MCF 10A (cell line): ENCODE measurements at regions of chr3 and their contacts with region 1.

Region 1: DNA sequence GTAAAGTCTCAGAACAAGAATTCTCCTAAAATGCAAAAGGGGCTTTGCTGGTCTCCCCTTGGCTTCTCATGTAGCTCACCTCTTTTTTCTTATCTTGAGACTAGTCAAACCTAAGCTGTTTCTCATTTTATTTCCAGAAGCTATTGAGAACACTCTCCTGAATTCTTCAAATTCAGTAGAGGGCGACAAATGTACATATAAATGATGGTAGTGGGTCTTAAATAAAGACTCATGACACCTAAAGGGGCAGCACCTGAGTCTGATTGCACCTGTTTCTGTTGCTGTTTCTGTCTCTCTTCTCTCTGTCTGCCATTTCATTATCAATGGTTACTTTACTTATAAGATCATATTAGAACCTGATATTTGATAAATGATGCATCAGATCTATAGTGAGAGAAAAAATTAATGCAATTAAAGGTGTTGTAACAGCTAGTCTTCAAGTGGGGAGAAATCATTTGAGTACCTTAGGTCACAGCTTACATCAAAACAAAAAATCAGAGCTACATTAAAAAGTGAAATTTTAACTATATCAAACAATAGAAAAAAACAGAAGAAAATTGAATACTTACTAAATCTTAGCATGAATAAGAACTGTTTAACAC is 7.0 kb downstream of the ADIPOQ start:
- DNase-seq: peak; percentile 55
- H3K4me3 Mint-ChIP-seq: no peak overlapping the region
- H3K27ac Mint-ChIP-seq: no peak overlapping the region
- H3K4me1 Mint-ChIP-seq: no peaks in the 10 kb centered on the region
- H3K27me3 Mint-ChIP-seq: peaks cover 29% of the 10 kb centered on the region
- CTCF ChIP-seq: peak; percentile 47

Region 2: GRCh38 chr3:186815435-186815834 is 34.0 kb before region 1 on chr3:
- CTCF ChIA-PET with region 1: no interaction called
- POLR2A ChIA-PET with region 1: no interaction called
- intact Hi-C with region 1: no loop called
- DNase-seq: peak; percentile 75
- H3K4me3 Mint-ChIP-seq: no peak overlapping the region
- H3K27ac Mint-ChIP-seq: peak overlapping the region; percentile 27
- H3K4me1 Mint-ChIP-seq: no peaks in the 10 kb centered on the region
- H3K27me3 Mint-ChIP-seq: no peaks in the 10 kb centered on the region
- CTCF ChIP-seq: no peak

Region 3: GRCh38 chr3:186915806-186916796 is 66.6 kb after region 1 on chr3:
- CTCF ChIA-PET with region 1: interaction called, 10 read pairs
- POLR2A ChIA-PET with region 1: interaction called, 3 read pairs
- intact Hi-C with region 1: no loop called
- DNase-seq: peak; percentile 80
- H3K4me3 Mint-ChIP-seq: peak overlapping the region; percentile 38
- H3K27ac Mint-ChIP-seq: no peak overlapping the region
- H3K4me1 Mint-ChIP-seq: peaks cover 16% of the 10 kb centered on the region
- H3K27me3 Mint-ChIP-seq: no peaks in the 10 kb centered on the region
- CTCF ChIP-seq: no peak

Region 4: GRCh38 chr3:186922790-186923189 is 73.3 kb after region 1 on chr3:
- CTCF ChIA-PET with region 1: interaction called, 12 read pairs
- POLR2A ChIA-PET with region 1: interaction called, 3 read pairs
- intact Hi-C with region 1: no loop called
- DNase-seq: peak; percentile 72
- H3K4me3 Mint-ChIP-seq: no peak overlapping the region
- H3K27ac Mint-ChIP-seq: peak overlapping the region; percentile 71
- H3K4me1 Mint-ChIP-seq: no peaks in the 10 kb centered on the region
- H3K27me3 Mint-ChIP-seq: no peaks in the 10 kb centered on the region
- CTCF ChIP-seq: no peak

Region 5: DNA sequence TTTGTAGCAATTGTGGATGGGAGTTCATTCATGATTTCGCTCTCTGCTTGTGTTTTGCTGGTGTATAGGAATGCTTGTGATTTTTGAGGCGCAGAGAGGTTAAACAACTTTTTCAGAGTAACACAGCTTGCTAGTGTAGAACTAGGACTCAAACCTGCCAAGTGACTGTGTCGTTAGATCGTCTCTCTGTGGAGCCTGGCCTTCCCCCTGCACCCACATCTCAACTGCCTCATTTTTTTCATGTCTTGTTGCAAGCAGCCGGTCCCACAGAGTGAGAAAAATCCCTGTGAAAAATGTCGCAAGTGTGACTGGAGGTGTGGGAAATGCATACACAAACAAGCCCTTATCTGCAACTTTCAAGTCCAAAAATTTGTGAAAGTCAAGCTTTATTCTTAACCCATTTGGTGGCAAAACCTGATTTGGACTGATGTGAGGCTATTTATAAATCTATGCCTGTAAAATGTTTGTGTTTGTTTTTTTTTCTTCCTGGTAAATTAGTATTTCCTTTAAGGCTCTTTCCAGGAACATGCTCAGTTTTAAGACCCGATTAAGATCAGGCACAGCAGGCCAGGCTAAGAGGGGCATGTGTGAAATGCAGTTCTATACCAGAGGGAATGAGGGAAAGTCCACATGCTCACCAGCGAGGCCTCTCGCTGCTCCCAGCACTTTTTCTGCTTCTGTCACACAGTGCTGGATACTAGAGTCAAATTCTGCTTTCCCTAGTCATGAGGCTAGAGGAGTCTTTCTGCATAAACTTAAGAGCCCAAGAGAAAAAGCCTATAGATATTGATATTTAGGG is 106.6 kb after region 1 on chr3:
- CTCF ChIA-PET with region 1: no interaction called
- POLR2A ChIA-PET with region 1: no interaction called
- intact Hi-C with region 1: no loop called
- DNase-seq: no peak
- H3K4me3 Mint-ChIP-seq: no peak overlapping the region
- H3K27ac Mint-ChIP-seq: no peak overlapping the region
- H3K4me1 Mint-ChIP-seq: peaks cover 8% of the 10 kb centered on the region
- H3K27me3 Mint-ChIP-seq: no peaks in the 10 kb centered on the region
- CTCF ChIP-seq: no peak

Region 6: DNA sequence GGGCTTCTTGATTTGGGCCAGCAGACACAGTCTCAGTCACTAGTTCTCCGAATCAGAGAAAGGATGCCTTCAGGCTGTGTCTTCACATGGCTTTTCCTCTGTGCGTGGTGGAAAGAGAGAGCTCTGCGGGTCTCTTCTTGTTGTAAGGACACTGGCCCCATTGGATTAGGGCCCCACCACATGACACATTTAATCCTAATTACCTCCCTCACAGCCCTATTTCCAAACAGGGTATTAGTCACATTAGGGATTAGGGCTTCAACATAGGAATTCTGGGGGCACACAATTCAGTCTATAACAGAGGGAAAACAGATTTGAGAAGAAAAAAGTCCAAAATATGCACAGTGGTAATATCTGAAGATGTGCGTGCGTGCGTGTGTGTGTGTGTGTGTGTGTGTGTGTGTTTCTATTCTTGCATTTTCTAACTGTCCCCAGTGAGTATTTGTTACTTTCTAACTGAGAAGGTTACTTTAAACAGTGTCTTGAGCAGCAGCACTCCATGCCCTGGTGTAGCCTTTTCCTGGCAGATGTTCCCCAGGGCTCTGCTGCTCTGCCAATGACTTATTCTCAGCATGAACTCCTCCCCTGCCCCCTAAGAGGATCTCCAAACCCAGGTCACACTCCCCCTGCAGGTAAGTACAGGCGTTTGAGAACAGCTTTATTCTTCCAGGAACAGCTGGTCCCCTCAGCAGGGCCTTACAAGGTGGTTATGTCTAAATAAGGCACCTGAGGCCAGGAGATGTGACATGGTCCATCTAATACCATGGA is 216.9 kb after region 1 on chr3:
- CTCF ChIA-PET with region 1: interaction called, 9 read pairs
- POLR2A ChIA-PET with region 1: interaction called, 3 read pairs
- intact Hi-C with region 1: loop called (anchors 2 kb)
- DNase-seq: peak; percentile 83
- H3K4me3 Mint-ChIP-seq: no peak overlapping the region
- H3K27ac Mint-ChIP-seq: no peak overlapping the region
- H3K4me1 Mint-ChIP-seq: peaks cover 48% of the 10 kb centered on the region
- H3K27me3 Mint-ChIP-seq: no peaks in the 10 kb centered on the region
- CTCF ChIP-seq: peak; percentile 19

Region 7: GRCh38 chr3:187164885-187165543 is 315.5 kb after region 1 on chr3:
- CTCF ChIA-PET with region 1: interaction called, 152 read pairs
- POLR2A ChIA-PET with region 1: interaction called, 13 read pairs
- intact Hi-C with region 1: loop called (anchors 1 kb)
- DNase-seq: peak; percentile 80
- H3K4me3 Mint-ChIP-seq: no peak overlapping the region
- H3K27ac Mint-ChIP-seq: no peak overlapping the region
- H3K4me1 Mint-ChIP-seq: peaks cover 10% of the 10 kb centered on the region
- H3K27me3 Mint-ChIP-seq: peaks cover 15% of the 10 kb centered on the region
- CTCF ChIP-seq: peak; percentile 54